CD8-positive, alpha-beta T cell (primary cell): ENCODE measurements at regions of chr20 and their contacts with region 1.

Region 1: DNA sequence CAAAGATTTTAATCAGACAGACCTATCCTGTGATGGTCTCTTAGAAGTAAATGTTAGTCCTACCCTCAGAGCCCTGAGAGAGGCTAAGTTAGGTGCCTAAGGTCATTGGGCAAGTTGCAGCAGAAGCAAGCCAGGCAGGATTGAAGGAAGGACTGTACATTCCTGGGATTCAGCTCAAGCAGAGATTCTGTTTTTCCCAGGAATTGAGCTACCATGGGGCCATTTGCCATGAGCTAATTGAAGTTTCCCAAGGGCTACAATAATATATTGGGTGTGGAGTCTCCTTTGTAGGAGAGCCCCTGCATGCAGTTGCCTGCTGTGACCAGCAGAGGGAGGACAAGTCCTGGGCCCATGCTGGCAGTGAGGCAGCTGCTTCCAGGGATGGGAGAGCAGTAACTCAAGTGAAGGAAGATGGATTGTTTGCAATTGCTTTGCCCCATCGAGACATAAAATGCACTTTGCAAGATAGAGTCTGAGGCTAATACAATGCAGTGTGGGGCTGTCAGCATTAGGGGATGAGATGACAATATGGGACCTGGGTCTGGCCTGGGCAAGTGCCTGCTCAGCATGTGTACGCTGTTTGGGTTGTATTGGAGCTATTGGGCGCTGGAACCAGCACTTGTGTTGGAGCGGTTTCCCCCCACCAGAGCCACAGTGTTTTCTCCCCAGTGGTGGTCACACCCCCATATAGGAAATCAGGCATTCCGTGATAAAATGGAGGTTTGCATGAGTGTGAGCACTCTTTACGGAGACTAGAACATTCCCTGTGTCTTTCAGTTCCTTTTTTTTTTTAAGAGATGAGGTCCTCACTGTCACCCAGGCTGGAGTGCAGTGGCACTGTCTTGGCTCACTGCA is 27.9 kb downstream of the DNMT3B start:
- DNase-seq: peak; percentile 48 to 83 (median 74)
- ATAC-seq: peak; percentile 77
- H3K4me3 ChIP-seq: no peak overlapping the region
- H3K4me3 Mint-ChIP-seq: no peak overlapping the region
- H3K27ac ChIP-seq: no peak overlapping the region
- H3K27ac Mint-ChIP-seq: no peak overlapping the region
- H3K4me1 ChIP-seq: peaks cover 34% of the 10 kb centered on the region
- H3K4me1 Mint-ChIP-seq: peaks cover 40% of the 10 kb centered on the region
- H3K27me3 ChIP-seq: no peaks in the 10 kb centered on the region
- H3K27me3 Mint-ChIP-seq: no peaks in the 10 kb centered on the region
- CTCF ChIP-seq: peak; percentile 99

Region 2: DNA sequence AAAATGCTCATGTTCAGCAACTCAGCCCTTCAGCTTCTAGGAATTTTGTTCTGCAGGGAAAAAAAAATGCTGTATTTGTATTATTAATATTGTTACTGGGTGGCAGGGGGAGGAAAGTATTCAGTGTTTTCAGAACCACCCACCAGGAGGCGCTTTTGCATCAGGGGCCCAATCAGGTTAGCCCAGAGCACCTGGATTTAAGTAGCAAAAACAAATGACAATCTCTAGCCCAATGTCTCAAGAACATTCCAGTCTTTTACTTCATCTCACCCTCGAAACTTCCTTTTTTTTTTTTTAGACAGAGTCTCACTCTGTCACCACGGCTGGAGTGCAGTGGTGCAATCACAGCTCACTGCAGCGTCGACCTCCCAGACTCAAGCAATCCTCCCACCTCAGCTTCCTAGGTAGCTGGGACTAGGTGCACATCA is 115.7 kb before region 1 on chr20:
- CTCF ChIA-PET with region 1: interaction called, 15 read pairs
- POLR2A ChIA-PET with region 1: no interaction called
- intact Hi-C with region 1: no loop called
- DNase-seq: peak; percentile 49 to 77 (median 73)
- ATAC-seq: peak; percentile 73
- H3K4me3 ChIP-seq: no peak overlapping the region
- H3K4me3 Mint-ChIP-seq: peak overlapping the region; percentile 9
- H3K27ac ChIP-seq: no peak overlapping the region
- H3K27ac Mint-ChIP-seq: no peak overlapping the region
- H3K4me1 ChIP-seq: peaks cover 16% of the 10 kb centered on the region
- H3K4me1 Mint-ChIP-seq: peaks cover 32% of the 10 kb centered on the region
- H3K27me3 ChIP-seq: no peaks in the 10 kb centered on the region
- H3K27me3 Mint-ChIP-seq: no peaks in the 10 kb centered on the region
- CTCF ChIP-seq: peak; percentile 75

Region 3: GRCh38 chr20:32808438-32808837 is 18.3 kb after region 1 on chr20:
- CTCF ChIA-PET with region 1: interaction called, 12 read pairs
- POLR2A ChIA-PET with region 1: no interaction called
- intact Hi-C with region 1: no loop called
- DNase-seq: no peak
- ATAC-seq: no peak
- H3K4me3 ChIP-seq: no peak overlapping the region
- H3K4me3 Mint-ChIP-seq: no peak overlapping the region
- H3K27ac ChIP-seq: no peak overlapping the region
- H3K27ac Mint-ChIP-seq: no peak overlapping the region
- H3K4me1 ChIP-seq: no peaks in the 10 kb centered on the region
- H3K4me1 Mint-ChIP-seq: peaks cover 3% of the 10 kb centered on the region
- H3K27me3 ChIP-seq: no peaks in the 10 kb centered on the region
- H3K27me3 Mint-ChIP-seq: no peaks in the 10 kb centered on the region
- CTCF ChIP-seq: no peak

Region 4: GRCh38 chr20:32830437-32830836 is 40.3 kb after region 1 on chr20:
- CTCF ChIA-PET with region 1: interaction called, 10 read pairs
- POLR2A ChIA-PET with region 1: no interaction called
- intact Hi-C with region 1: loop called in 1 of 2 experiments (anchors 2 kb)
- DNase-seq: peak in 1 of 9 experiments; percentile 34
- ATAC-seq: no peak
- H3K4me3 ChIP-seq: no peak overlapping the region
- H3K4me3 Mint-ChIP-seq: peak overlapping the region; percentile 23
- H3K27ac ChIP-seq: no peak overlapping the region
- H3K27ac Mint-ChIP-seq: peak overlapping the region; percentile 53
- H3K4me1 ChIP-seq: peaks cover 49% of the 10 kb centered on the region
- H3K4me1 Mint-ChIP-seq: peaks cover 63% of the 10 kb centered on the region
- H3K27me3 ChIP-seq: no peaks in the 10 kb centered on the region
- H3K27me3 Mint-ChIP-seq: no peaks in the 10 kb centered on the region
- CTCF ChIP-seq: no peak

Region 5: GRCh38 chr20:32902456-32903420 is 112.6 kb after region 1 on chr20:
- CTCF ChIA-PET with region 1: interaction called, 20 read pairs
- POLR2A ChIA-PET with region 1: no interaction called
- intact Hi-C with region 1: loop called (anchors 5 kb)
- DNase-seq: peak; percentile 28 to 83 (median 71)
- ATAC-seq: peak; percentile 98
- H3K4me3 ChIP-seq: no peak overlapping the region
- H3K4me3 Mint-ChIP-seq: no peak overlapping the region
- H3K27ac ChIP-seq: no peak overlapping the region
- H3K27ac Mint-ChIP-seq: no peak overlapping the region
- H3K4me1 ChIP-seq: peaks cover 17% of the 10 kb centered on the region
- H3K4me1 Mint-ChIP-seq: peaks cover 22% of the 10 kb centered on the region
- H3K27me3 ChIP-seq: no peaks in the 10 kb centered on the region
- H3K27me3 Mint-ChIP-seq: no peaks in the 10 kb centered on the region
- CTCF ChIP-seq: peak; percentile 97

Region 6: GRCh38 chr20:33005132-33005566 is 215.0 kb after region 1 on chr20:
- CTCF ChIA-PET with region 1: interaction called, 5 read pairs
- POLR2A ChIA-PET with region 1: no interaction called
- intact Hi-C with region 1: loop called in 1 of 2 experiments (anchors 5 kb)
- DNase-seq: peak in 3 of 9 experiments; percentile 38 to 69 (median 58)
- ATAC-seq: no peak
- H3K4me3 ChIP-seq: no peak overlapping the region
- H3K4me3 Mint-ChIP-seq: no peak overlapping the region
- H3K27ac ChIP-seq: no peak overlapping the region
- H3K27ac Mint-ChIP-seq: no peak overlapping the region
- H3K4me1 ChIP-seq: peaks cover 11% of the 10 kb centered on the region
- H3K4me1 Mint-ChIP-seq: peaks cover 27% of the 10 kb centered on the region
- H3K27me3 ChIP-seq: no peaks in the 10 kb centered on the region
- H3K27me3 Mint-ChIP-seq: no peaks in the 10 kb centered on the region
- CTCF ChIP-seq: peak; percentile 64

Region 7: GRCh38 chr20:33299111-33299603 is 509.0 kb after region 1 on chr20:
- CTCF ChIA-PET with region 1: interaction called, 5 read pairs
- POLR2A ChIA-PET with region 1: no interaction called
- intact Hi-C with region 1: loop called (anchors 1 kb)
- DNase-seq: peak; percentile 58 to 83 (median 75)
- ATAC-seq: peak; percentile 82
- H3K4me3 ChIP-seq: no peak overlapping the region
- H3K4me3 Mint-ChIP-seq: no peak overlapping the region
- H3K27ac ChIP-seq: no peak overlapping the region
- H3K27ac Mint-ChIP-seq: no peak overlapping the region
- H3K4me1 ChIP-seq: no peaks in the 10 kb centered on the region
- H3K4me1 Mint-ChIP-seq: no peaks in the 10 kb centered on the region
- H3K27me3 ChIP-seq: no peaks in the 10 kb centered on the region
- H3K27me3 Mint-ChIP-seq: peaks cover 6% of the 10 kb centered on the region
- CTCF ChIP-seq: peak; percentile 85